ENCODE measurements at regions of chrX and their contacts with region 1.

Region 1: GRCh38 chrX:147522981-147523380 is 388.7 kb upstream of the FMR1 start:
- DNase-seq: no peak
- ATAC-seq: no peak
- H3K4me3 ChIP-seq: no peak overlapping the region
- H3K27ac ChIP-seq: no peak overlapping the region
- H3K4me1 ChIP-seq: no peaks in the 10 kb centered on the region
- H3K27me3 ChIP-seq: no peaks in the 10 kb centered on the region
- CTCF ChIP-seq: no peak
- POLR2A ChIP-seq: no peak
- RAD21 ChIP-seq: no peak

Region 2: DNA sequence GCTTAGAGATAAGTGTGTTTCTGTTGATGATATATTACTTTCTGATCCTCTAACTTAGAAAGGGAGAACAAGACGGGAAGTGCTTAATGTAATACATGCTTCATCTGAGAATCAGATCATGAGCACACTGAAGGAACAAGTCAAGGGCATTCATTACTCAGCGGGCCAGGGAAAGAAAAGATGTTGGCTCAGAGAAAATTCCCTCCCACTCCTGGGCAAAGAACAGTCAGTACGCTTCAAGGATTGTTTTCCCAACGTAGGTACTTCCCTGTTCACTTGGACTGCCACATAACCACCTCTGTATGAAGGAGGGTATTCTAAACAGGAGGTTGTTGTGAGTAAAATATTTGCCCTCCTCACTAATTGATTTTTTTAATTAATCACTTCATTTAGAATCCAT is 14.2 kb after region 1 on chrX:
- CTCF ChIA-PET with region 1: interaction called, 12 read pairs
- POLR2A ChIA-PET with region 1: no interaction called
- dilution Hi-C with region 1: no loop called
- in situ Hi-C with region 1: no loop called
- intact Hi-C with region 1: no loop called
- DNase-seq: no peak
- ATAC-seq: no peak
- H3K4me3 ChIP-seq: no peak overlapping the region
- H3K27ac ChIP-seq: no peak overlapping the region
- H3K4me1 ChIP-seq: no peaks in the 10 kb centered on the region
- H3K27me3 ChIP-seq: no peaks in the 10 kb centered on the region
- CTCF ChIP-seq: no peak
- POLR2A ChIP-seq: no peak
- RAD21 ChIP-seq: no peak

Region 3: GRCh38 chrX:147679356-147680005 is 156.5 kb after region 1 on chrX:
- CTCF ChIA-PET with region 1: no interaction called
- POLR2A ChIA-PET with region 1: no interaction called
- dilution Hi-C with region 1: no loop called
- in situ Hi-C with region 1: no loop called
- intact Hi-C with region 1: no loop called
- DNase-seq: no peak
- ATAC-seq: no peak
- H3K4me3 ChIP-seq: no peak overlapping the region
- H3K27ac ChIP-seq: no peak overlapping the region
- H3K4me1 ChIP-seq: no peaks in the 10 kb centered on the region
- H3K27me3 ChIP-seq: no peaks in the 10 kb centered on the region
- CTCF ChIP-seq: no peak
- POLR2A ChIP-seq: no peak
- RAD21 ChIP-seq: no peak

Region 4: DNA sequence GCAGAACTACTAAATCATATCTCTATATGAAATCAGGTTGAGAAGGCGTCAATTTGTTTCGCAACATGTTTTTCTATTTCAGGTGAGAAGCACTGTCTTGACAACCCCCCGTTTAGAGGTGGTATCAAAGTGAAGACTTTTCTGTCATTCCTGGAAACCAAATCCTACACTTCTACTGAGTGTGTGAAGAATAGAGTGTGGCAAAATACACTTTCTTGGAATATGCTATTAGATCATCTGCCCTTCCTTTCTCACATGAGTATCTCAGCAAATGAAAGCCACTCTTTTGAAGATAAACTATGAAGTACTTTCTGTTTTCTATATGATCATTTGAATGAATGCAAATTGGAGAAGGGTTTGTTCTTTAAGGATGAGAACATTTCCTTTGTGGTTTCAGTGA is 214.7 kb after region 1 on chrX:
- CTCF ChIA-PET with region 1: no interaction called
- POLR2A ChIA-PET with region 1: no interaction called
- dilution Hi-C with region 1: no loop called
- in situ Hi-C with region 1: no loop called
- intact Hi-C with region 1: no loop called
- DNase-seq: no peak
- ATAC-seq: no peak
- H3K4me3 ChIP-seq: no peak overlapping the region
- H3K27ac ChIP-seq: no peak overlapping the region
- H3K4me1 ChIP-seq: no peaks in the 10 kb centered on the region
- H3K27me3 ChIP-seq: no peaks in the 10 kb centered on the region
- CTCF ChIP-seq: no peak
- POLR2A ChIP-seq: no peak
- RAD21 ChIP-seq: no peak

Region 5: GRCh38 chrX:147958291-147958690 is 435.3 kb after region 1 on chrX:
- CTCF ChIA-PET with region 1: no interaction called
- POLR2A ChIA-PET with region 1: no interaction called
- dilution Hi-C with region 1: no loop called
- in situ Hi-C with region 1: no loop called
- intact Hi-C with region 1: no loop called
- DNase-seq: peak; percentile 57
- ATAC-seq: peak; percentile 76
- H3K4me3 ChIP-seq: no peak overlapping the region
- H3K27ac ChIP-seq: no peak overlapping the region
- H3K4me1 ChIP-seq: no peaks in the 10 kb centered on the region
- H3K27me3 ChIP-seq: no peaks in the 10 kb centered on the region
- CTCF ChIP-seq: no peak
- POLR2A ChIP-seq: no peak
- RAD21 ChIP-seq: no peak

Region 6: GRCh38 chrX:148713981-148714380 is 1191.0 kb after region 1 on chrX:
- CTCF ChIA-PET with region 1: no interaction called
- POLR2A ChIA-PET with region 1: no interaction called
- dilution Hi-C with region 1: no loop called
- in situ Hi-C with region 1: no loop called
- intact Hi-C with region 1: no loop called
- DNase-seq: no peak
- ATAC-seq: no peak
- H3K4me3 ChIP-seq: no peak overlapping the region
- H3K27ac ChIP-seq: no peak overlapping the region
- H3K4me1 ChIP-seq: no peaks in the 10 kb centered on the region
- H3K27me3 ChIP-seq: no peaks in the 10 kb centered on the region
- CTCF ChIP-seq: no peak
- POLR2A ChIP-seq: no peak
- RAD21 ChIP-seq: no peak